Sciatic nerve (tissue), 2 donors: ENCODE measurements at regions of chr13 and their contacts with region 1.

Region 1: GRCh38 chr13:95185851-95186250 is 115.4 kb downstream of the ABCC4 start:
- DNase-seq: no peak
- ATAC-seq: peak; percentile 50

Region 2: DNA sequence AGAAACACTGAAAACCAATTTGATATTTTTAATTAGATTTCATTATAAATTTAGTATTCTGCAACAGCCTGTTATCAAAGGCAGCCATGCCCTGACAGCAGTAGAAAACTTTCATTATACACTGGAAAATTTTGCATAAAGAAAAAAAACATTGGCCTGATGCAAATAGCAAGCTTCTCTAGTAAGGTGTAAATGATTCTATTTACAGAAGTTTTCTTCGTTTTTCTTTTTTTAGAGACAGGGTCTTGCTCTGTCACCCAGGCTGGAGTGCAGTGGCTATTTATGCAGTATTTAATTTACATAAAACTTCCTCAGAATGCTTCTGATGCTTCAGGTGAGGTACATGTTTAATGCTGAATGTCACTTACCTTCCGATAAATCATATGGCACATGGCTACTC is 48.4 kb after region 1 on chr13:
- intact Hi-C with region 1: no loop called
- DNase-seq: no peak
- ATAC-seq: no peak

Region 3: DNA sequence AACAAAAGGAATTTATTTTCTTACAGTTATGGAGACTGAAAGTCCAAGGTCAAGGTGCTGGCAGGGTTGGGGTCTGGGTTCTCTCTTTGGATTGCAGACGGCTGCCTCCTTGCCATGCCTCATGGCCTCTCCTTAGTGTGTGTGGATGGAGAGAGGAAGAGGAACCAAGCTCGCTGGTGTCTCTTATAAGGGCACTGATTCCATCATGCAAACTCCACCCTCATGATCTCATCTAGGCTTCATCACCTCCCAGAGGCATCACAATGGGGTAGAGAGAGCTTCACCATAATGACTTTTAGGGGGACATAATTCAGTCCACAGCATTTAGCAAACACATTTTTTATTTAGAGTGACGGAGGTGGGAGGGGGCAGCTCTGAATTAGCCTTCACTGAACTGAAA is 220.3 kb after region 1 on chr13:
- intact Hi-C with region 1: loop called (anchors 5 kb)
- DNase-seq: no peak
- ATAC-seq: no peak

Region 4: DNA sequence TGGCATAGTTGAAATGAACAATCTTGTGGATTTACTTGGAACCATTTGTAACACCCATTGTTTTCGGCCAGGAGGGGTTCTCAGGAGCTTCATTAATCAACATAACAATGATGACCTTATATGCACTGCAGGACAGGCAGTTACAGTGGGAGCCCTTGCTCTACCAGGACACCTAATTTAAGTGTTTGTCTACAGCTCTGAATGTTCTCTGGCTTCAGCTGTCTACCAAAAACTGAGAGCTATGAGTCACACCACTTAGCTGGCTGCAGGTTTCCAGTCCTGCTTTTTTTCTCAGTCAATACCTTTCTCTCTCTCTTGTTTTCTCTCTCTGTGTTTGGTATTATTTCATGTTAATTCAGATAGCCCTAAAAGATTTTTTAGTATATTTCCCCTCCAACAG is 1930.9 kb after region 1 on chr13:
- intact Hi-C with region 1: no loop called
- DNase-seq: no peak
- ATAC-seq: peak; percentile 52